CD8-positive, alpha-beta T cell (primary cell): ENCODE measurements at regions of chr2 and their contacts with region 1.

Region 1: GRCh38 chr2:160590664-160591063 is 97.1 kb upstream of the RBMS1 start:
- DNase-seq: no peak
- ATAC-seq: no peak
- H3K4me3 ChIP-seq: no peak overlapping the region
- H3K4me3 Mint-ChIP-seq: no peak overlapping the region
- H3K27ac ChIP-seq: no peak overlapping the region
- H3K27ac Mint-ChIP-seq: no peak overlapping the region
- H3K4me1 ChIP-seq: peaks cover 4% of the 10 kb centered on the region
- H3K4me1 Mint-ChIP-seq: peaks cover 6% of the 10 kb centered on the region
- H3K27me3 ChIP-seq: no peaks in the 10 kb centered on the region
- H3K27me3 Mint-ChIP-seq: no peaks in the 10 kb centered on the region
- CTCF ChIP-seq: no peak

Region 2: DNA sequence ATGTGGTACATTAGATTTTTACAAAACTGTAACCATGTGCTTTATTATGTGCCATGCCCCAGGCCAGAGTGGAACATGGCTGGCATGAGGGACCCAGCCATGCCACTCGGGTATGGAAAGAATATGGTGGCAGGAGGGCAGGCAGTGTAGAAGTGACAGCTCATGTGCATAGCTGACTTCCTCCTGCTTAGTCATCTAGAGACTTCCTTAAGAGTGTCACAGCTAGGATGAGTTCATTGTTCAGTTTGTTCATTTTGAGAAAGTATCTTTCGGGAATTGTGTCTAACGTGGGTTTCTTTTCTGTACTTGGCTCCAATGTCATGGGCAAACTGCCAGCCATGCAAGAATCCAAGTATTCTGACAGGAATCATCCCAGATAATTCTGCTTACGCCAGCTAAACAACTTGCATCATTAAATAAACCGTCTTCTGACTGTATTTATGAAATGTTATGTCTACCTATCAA is 296.3 kb before region 1 on chr2:
- CTCF ChIA-PET with region 1: no interaction called
- POLR2A ChIA-PET with region 1: no interaction called
- intact Hi-C with region 1: no loop called
- DNase-seq: no peak
- ATAC-seq: no peak
- H3K4me3 ChIP-seq: no peak overlapping the region
- H3K4me3 Mint-ChIP-seq: no peak overlapping the region
- H3K27ac ChIP-seq: no peak overlapping the region
- H3K27ac Mint-ChIP-seq: peak overlapping the region; percentile 69
- H3K4me1 ChIP-seq: peaks cover 28% of the 10 kb centered on the region
- H3K4me1 Mint-ChIP-seq: peaks cover 57% of the 10 kb centered on the region
- H3K27me3 ChIP-seq: no peaks in the 10 kb centered on the region
- H3K27me3 Mint-ChIP-seq: no peaks in the 10 kb centered on the region
- CTCF ChIP-seq: no peak

Region 3: GRCh38 chr2:160358046-160358445 is 232.6 kb before region 1 on chr2:
- CTCF ChIA-PET with region 1: no interaction called
- POLR2A ChIA-PET with region 1: no interaction called
- intact Hi-C with region 1: no loop called
- DNase-seq: no peak
- ATAC-seq: no peak
- H3K4me3 ChIP-seq: no peak overlapping the region
- H3K4me3 Mint-ChIP-seq: no peak overlapping the region
- H3K27ac ChIP-seq: no peak overlapping the region
- H3K27ac Mint-ChIP-seq: no peak overlapping the region
- H3K4me1 ChIP-seq: peaks cover 10% of the 10 kb centered on the region
- H3K4me1 Mint-ChIP-seq: peaks cover 80% of the 10 kb centered on the region
- H3K27me3 ChIP-seq: no peaks in the 10 kb centered on the region
- H3K27me3 Mint-ChIP-seq: no peaks in the 10 kb centered on the region
- CTCF ChIP-seq: no peak

Region 4: DNA sequence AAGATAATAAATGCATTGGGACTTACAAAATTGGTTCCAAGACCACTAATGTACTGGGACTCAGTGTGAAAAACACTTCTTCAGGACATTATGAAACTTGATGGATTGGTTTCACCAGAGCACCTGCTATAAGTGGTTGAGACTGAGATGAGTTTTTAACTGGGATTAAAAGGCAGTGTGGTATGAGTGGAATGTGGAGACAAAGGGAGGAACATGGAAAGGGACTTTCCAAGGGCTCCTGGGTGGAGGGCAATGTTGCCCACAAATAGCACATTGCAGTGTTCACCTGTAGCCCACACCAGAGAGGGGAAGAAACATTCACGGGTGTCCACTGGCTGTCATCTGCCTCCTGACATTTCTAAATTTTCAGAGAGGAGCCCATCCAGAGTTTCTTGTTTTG is 316.2 kb after region 1 on chr2:
- CTCF ChIA-PET with region 1: no interaction called
- POLR2A ChIA-PET with region 1: no interaction called
- intact Hi-C with region 1: loop called in 1 of 2 experiments (anchors 5 kb)
- DNase-seq: no peak
- ATAC-seq: no peak
- H3K4me3 ChIP-seq: no peak overlapping the region
- H3K4me3 Mint-ChIP-seq: no peak overlapping the region
- H3K27ac ChIP-seq: no peak overlapping the region
- H3K27ac Mint-ChIP-seq: no peak overlapping the region
- H3K4me1 ChIP-seq: no peaks in the 10 kb centered on the region
- H3K4me1 Mint-ChIP-seq: no peaks in the 10 kb centered on the region
- H3K27me3 ChIP-seq: no peaks in the 10 kb centered on the region
- H3K27me3 Mint-ChIP-seq: no peaks in the 10 kb centered on the region
- CTCF ChIP-seq: no peak